Breast epithelium (tissue), 4 donors: ENCODE measurements at regions of chr2 and their contacts with region 1.

Region 1: GRCh38 chr2:164593959-164594358 is 27.3 kb downstream of the GRB14 start:
- DNase-seq: no peak
- H3K4me3 ChIP-seq: no peak overlapping the region
- H3K27ac ChIP-seq: no peak overlapping the region
- H3K4me1 ChIP-seq: no peaks in the 10 kb centered on the region
- H3K27me3 ChIP-seq: no peaks in the 10 kb centered on the region
- CTCF ChIP-seq: no peak
- POLR2A ChIP-seq: no peak

Region 2: GRCh38 chr2:163123526-163123925 is 1470.4 kb before region 1 on chr2:
- intact Hi-C with region 1: no loop called
- DNase-seq: no peak
- H3K4me3 ChIP-seq: no peak overlapping the region
- H3K27ac ChIP-seq: no peak overlapping the region
- H3K4me1 ChIP-seq: no peaks in the 10 kb centered on the region
- H3K27me3 ChIP-seq: no peaks in the 10 kb centered on the region
- CTCF ChIP-seq: no peak
- POLR2A ChIP-seq: no peak

Region 3: GRCh38 chr2:163528640-163529217 is 1065.2 kb before region 1 on chr2:
- intact Hi-C with region 1: loop called (anchors 5 kb)
- DNase-seq: no peak
- H3K4me3 ChIP-seq: no peak overlapping the region
- H3K27ac ChIP-seq: no peak overlapping the region
- H3K4me1 ChIP-seq: no peaks in the 10 kb centered on the region
- H3K27me3 ChIP-seq: no peaks in the 10 kb centered on the region
- CTCF ChIP-seq: no peak
- POLR2A ChIP-seq: no peak

Region 4: GRCh38 chr2:164538240-164538866 is 55.6 kb before region 1 on chr2:
- intact Hi-C with region 1: no loop called
- DNase-seq: no peak
- H3K4me3 ChIP-seq: no peak overlapping the region
- H3K27ac ChIP-seq: no peak overlapping the region
- H3K4me1 ChIP-seq: no peaks in the 10 kb centered on the region
- H3K27me3 ChIP-seq: no peaks in the 10 kb centered on the region
- CTCF ChIP-seq: peak in 2 of 3 donors; percentile 31 to 63
- POLR2A ChIP-seq: no peak

Region 5: DNA sequence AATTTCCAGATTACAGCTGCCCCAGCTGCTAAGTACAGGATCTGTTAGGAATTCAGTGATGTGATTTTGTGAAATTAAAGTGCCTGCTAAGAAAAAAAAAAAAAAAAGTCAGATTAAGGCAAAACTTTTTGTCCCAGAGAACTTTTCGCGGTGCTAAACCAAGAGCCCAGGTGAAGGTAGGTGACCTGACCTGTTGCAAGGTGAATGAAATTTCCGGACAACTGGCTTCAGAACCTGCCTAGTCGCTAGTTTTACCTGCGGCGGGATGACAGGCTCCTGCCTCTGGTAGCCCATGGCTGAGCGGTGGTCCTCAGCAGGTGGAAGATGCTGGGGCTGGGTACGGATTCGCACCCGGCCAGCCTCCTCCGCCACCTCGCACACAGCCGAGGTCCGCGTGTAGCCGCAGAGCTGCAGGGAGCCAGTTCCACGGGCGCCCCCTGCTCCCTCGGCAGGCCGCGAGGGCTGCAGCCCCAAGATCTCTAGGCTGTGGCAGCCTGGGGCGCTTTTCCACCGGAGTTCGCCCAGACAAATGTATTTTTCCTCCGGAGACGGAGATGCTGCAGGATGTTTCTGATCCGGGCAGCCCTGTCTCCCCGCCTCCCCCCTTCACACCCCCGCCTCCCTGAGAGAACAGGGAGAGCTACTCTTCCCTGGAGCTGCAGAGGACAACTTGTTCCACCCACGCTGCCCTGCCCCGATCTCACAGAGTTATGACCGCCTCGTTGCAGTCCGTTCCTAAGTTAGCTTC is 361.2 kb after region 1 on chr2 and contains the start of gene SLC38A11:
- intact Hi-C with region 1: no loop called
- DNase-seq: peak in 1 of 2 donors; percentile 26
- H3K4me3 ChIP-seq: peak within 1 kb of the TSS; percentile 21 to 64 (median 48)
- H3K27ac ChIP-seq: no peak within 1 kb of the TSS
- H3K4me1 ChIP-seq: no peaks in the 10 kb centered on the region
- H3K27me3 ChIP-seq: no peaks in the 10 kb centered on the region
- CTCF ChIP-seq: no peak
- POLR2A ChIP-seq: no peak
- total RNA-seq, gene SLC38A11: 2.2 to 6.7 TPM in 2 of 3 donors, not detected in the other

Region 6: DNA sequence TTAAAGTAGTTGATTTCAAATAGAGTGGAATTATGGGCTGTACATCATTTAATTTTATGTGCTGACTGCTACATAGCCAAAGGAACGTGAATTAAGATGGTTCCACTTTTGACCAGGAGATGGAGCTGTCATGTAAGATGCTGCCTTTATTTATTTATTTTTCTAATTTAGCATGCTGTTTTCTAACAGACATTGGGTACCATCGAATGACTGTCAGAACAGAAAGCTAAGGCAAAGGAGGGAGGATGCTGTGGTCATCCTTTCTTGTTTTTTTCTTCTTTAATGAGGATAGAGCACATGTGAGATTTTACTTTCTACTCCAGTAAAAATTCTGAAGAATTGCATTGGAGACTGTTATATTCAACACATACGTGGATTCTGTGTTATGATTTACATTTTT is 645.3 kb after region 1 on chr2 and contains the start of gene SCN2A:
- intact Hi-C with region 1: no loop called
- DNase-seq: no peak
- H3K4me3 ChIP-seq: no peak within 1 kb of the TSS
- H3K27ac ChIP-seq: no peak within 1 kb of the TSS
- H3K4me1 ChIP-seq: no peaks in the 10 kb centered on the region
- H3K27me3 ChIP-seq: no peaks in the 10 kb centered on the region
- CTCF ChIP-seq: peak; percentile 31 to 54 (median 46)
- POLR2A ChIP-seq: no peak
- total RNA-seq, gene SCN2A: 0.16 to 2.2 (median 2.0) TPM